IMR-90 (cell line): ENCODE measurements at regions of chr16 and their contacts with region 1.

Region 1: GRCh38 chr16:67841764-67842508 is at the start of gene THAP11:
- DNase-seq: peak; percentile 92
- ATAC-seq: peak; percentile 67
- H3K4me3 ChIP-seq: peak within 1 kb of the TSS; percentile 69
- H3K27ac ChIP-seq: peak within 1 kb of the TSS; percentile 91
- H3K4me1 ChIP-seq: peaks cover 13% of the 10 kb centered on the region
- H3K27me3 ChIP-seq: no peaks in the 10 kb centered on the region
- CTCF ChIP-seq: peak; percentile 96
- POLR2A ChIP-seq: peak; percentile 52; the same call in 1 of the 2 replicates
- RAD21 ChIP-seq: peak; percentile 50
- total RNA-seq, gene THAP11: 13.3 and 13.9 TPM in 2 replicates

Region 2: GRCh38 chr16:67928561-67929364 is 86.8 kb after region 1 on chr16:
- CTCF ChIA-PET with region 1: no interaction called
- POLR2A ChIA-PET with region 1: no interaction called
- dilution Hi-C with region 1: no loop called
- in situ Hi-C with region 1: no loop called
- intact Hi-C with region 1: loop called (anchors 1 kb)
- DNase-seq: peak; percentile 43
- ATAC-seq: peak; percentile 92
- H3K4me3 ChIP-seq: no peak overlapping the region
- H3K27ac ChIP-seq: no peak overlapping the region
- H3K4me1 ChIP-seq: no peaks in the 10 kb centered on the region
- H3K27me3 ChIP-seq: no peaks in the 10 kb centered on the region
- CTCF ChIP-seq: peak; percentile 87
- POLR2A ChIP-seq: no peak
- RAD21 ChIP-seq: peak; percentile 94